ENCODE measurements at regions of chr3 and their contacts with region 1.

Region 1: DNA sequence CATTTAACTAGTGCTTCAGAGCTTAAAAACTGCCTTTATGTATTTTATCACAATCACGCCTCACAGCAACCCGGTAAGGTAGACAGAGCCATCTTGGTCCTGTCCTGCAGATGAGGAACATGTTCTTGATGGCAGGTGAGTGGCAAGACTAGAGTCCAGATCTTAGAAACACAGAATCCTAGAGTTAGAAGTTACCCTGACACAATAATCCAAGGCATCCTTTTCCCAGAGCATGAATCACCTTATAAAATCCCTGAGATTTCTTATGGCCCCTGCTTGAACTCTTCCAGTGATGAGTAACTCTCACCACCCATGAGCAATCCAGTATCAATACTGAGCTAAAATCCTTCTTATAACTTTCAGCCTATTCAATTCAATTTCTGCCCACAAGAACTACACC is 16.9 kb downstream of the POPDC2 start:
- DNase-seq: no peak
- H3K4me3 ChIP-seq: no peak overlapping the region
- H3K27ac ChIP-seq: no peak overlapping the region
- H3K4me1 ChIP-seq: peaks cover 0 to 7% (median 2%) of the 10 kb centered on the region in 4 experiments; a peak in 3 of 7 replicates
- H3K27me3 ChIP-seq: no peaks in the 10 kb centered on the region
- CTCF ChIP-seq: no peak
- EP300 ChIP-seq: no peak
- POLR2A ChIP-seq: no peak
- RAD21 ChIP-seq: no peak

Region 2: GRCh38 chr3:119662604-119663373 is 19.3 kb after region 1 on chr3:
- CTCF ChIA-PET with region 1: interaction called, 10 read pairs
- POLR2A ChIA-PET with region 1: interaction called, 4 read pairs
- DNase-seq: no peak
- H3K4me3 ChIP-seq: no peak overlapping the region
- H3K27ac ChIP-seq: no peak overlapping the region
- H3K4me1 ChIP-seq: no peaks in the 10 kb centered on the region
- H3K27me3 ChIP-seq: no peaks in the 10 kb centered on the region
- CTCF ChIP-seq: peak in 1 of 3 experiments; percentile 30; a peak in 1 of 4 replicates
- EP300 ChIP-seq: no peak
- POLR2A ChIP-seq: no peak
- RAD21 ChIP-seq: peak; percentile 2 to 7; a peak in 1 of 4 replicates

Measured in H1 (cell line).